ENCODE measurements at regions of chr13 and their contacts with region 1.

Region 1: DNA sequence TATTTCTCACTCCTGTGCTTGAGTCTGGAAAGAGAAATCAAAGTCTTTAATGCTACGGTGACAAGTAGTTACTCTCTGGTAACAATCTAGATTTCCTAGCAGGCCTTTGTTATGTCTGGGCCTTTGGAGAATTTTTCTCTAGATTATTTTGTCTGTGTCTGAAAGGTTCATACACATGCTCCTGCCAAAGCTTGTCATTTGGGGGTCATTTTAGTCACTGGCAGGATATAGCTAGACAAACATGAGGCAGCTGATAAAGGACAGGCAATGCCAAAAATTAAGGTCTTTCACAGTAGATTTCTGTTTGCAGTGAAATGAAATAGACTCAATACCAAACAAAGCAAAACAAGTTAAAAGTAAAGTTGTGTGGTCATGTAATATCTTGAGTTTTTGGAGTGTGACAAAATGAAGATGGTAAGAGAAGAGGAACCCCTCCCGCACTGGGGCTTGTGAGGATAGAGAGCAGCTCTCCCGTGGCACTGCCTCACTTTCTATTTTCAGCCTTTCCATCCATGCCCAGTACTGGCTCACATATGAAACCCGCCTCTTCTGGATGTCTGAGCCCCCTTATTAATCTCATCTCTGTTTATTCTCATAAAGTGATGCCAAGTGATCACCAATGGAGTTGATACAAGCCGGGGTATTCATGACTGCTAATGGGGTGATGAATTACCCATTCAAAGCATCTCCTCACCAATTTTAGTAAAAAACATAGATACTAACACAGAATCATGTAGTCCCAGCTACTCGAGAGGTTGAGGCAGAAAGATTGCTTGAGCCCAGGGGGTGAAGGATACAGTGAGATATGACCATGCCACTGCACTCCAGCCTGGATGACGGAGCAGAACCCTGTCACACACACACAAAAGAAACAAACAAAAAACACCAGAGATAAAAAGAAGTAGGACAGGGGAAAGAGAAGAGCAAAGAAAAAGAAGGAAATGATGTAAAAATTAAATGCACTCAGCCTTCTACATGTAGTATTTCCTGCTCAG is 389.3 kb downstream of the FGF14 start:
- DNase-seq: peak; percentile 17 to 66
- ATAC-seq: peak; percentile 90 to 99 (median 98)
- H3K4me3 ChIP-seq: peak overlapping the region in 3 of 10 donors; percentile 15 to 20 (median 19)
- H3K27ac ChIP-seq: peak overlapping the region; percentile 60 to 92 (median 84)
- H3K4me1 ChIP-seq: peaks cover 0 to 40% (median 16%) of the 10 kb centered on the region in 9 donors
- H3K27me3 ChIP-seq: no peaks in the 10 kb centered on the region
- CTCF ChIP-seq: no peak

Region 2: DNA sequence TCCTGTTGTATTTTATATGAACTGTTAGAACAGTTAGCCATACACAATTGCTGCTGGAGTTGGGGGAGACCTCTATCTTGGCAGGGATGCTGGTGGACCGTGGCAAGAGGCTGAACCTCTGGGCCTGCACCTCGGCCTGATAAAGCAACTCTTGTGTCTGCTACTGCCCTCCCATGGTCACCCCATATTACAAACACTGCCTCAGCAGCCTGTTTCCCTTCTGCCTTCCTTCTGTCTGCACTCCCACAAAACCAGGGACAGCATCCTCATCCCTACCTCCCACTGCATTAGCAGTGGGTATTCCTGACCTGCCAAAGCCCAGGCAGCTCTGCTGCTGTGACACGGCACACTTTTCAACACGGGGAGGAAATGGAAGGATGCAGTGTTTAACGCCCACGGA is 67.2 kb before region 1 on chr13:
- intact Hi-C with region 1: no loop called
- DNase-seq: no peak
- ATAC-seq: no peak
- H3K4me3 ChIP-seq: no peak overlapping the region
- H3K27ac ChIP-seq: no peak overlapping the region
- H3K4me1 ChIP-seq: peaks cover 0 to 9% (median 4%) of the 10 kb centered on the region in 9 donors
- H3K27me3 ChIP-seq: no peaks in the 10 kb centered on the region
- CTCF ChIP-seq: no peak

Region 3: GRCh38 chr13:101982903-101983302 is 29.7 kb before region 1 on chr13:
- intact Hi-C with region 1: loop called in 1 of 10 experiments (anchors 2 kb)
- DNase-seq: no peak
- ATAC-seq: peak in 6 of 8 donors; percentile 38 to 87 (median 76)
- H3K4me3 ChIP-seq: no peak overlapping the region
- H3K27ac ChIP-seq: peak overlapping the region in 6 of 10 donors; percentile 33 to 64 (median 52)
- H3K4me1 ChIP-seq: peaks cover 0 to 41% (median 9%) of the 10 kb centered on the region in 9 donors
- H3K27me3 ChIP-seq: no peaks in the 10 kb centered on the region
- CTCF ChIP-seq: no peak

Region 4: GRCh38 chr13:102091231-102091630 is 78.6 kb after region 1 on chr13:
- intact Hi-C with region 1: loop called in 2 of 10 experiments (anchors 5 to 10 kb)
- DNase-seq: no peak
- ATAC-seq: peak in 2 of 8 donors; percentile 24 to 44
- H3K4me3 ChIP-seq: no peak overlapping the region
- H3K27ac ChIP-seq: peak overlapping the region in 2 of 10 donors; percentile 57 to 72
- H3K4me1 ChIP-seq: peaks cover 0 to 32% (median 0%) of the 10 kb centered on the region in 9 donors
- H3K27me3 ChIP-seq: no peaks in the 10 kb centered on the region
- CTCF ChIP-seq: peak in 3 of 9 donors; percentile 9 to 15 (median 15)

Measured in heart right ventricle (tissue), 16 donors.